ENCODE measurements at regions of chr14 and their contacts with region 1.

Region 1: DNA sequence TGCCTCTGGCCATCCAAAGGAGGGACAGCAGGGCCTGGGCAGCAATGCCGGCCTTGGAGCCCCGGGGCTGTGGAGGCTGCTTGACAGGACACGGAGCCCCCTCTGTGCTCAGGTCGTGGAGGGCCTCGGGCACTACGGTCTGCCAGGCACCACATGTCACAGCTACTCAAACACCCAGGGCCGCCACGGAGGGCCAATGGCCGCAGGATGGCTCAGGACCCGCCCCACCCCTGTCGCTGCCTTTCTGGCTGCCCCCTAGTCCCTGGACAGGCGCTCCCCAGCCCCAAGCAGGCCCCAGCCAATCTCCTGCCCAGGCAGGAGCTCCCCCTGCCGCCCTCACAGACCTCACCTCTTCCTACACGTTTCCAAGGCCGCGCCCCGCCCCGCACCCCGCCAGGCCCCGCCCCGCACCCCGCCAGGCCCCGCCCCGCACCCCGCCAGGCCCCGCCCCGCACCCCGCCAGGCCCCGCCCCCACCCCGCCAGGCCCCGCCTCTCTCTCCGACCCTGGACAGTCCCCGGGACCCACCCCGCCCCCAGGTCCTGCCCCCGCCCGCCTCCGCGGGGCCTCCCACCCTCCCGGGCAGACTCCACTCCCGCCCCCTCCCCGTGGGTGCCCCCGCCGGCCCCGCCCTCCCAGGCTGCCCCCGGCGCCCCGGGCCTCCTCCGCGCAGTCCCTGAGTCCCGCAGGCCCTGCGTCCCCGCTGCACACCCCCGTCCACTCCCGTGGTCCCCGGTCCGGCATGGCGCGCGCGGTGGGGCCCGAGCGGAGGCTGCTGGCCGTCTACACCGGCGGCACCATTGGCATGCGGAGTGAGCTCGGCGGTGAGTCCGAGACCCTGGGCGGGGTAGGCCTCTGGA is at the start of gene ASPG:
- DNase-seq: peak; percentile 75 to 87 (median 84)
- ATAC-seq: peak; percentile 44 to 50
- H3K4me3 ChIP-seq: peak within 1 kb of the TSS; percentile 36
- H3K27ac ChIP-seq: peak within 1 kb of the TSS; percentile 78
- H3K4me1 ChIP-seq: peaks cover 5% of the 10 kb centered on the region
- H3K27me3 ChIP-seq: no peaks in the 10 kb centered on the region
- total RNA-seq, gene ASPG: 169 to 307 (median 208) TPM

Region 2: DNA sequence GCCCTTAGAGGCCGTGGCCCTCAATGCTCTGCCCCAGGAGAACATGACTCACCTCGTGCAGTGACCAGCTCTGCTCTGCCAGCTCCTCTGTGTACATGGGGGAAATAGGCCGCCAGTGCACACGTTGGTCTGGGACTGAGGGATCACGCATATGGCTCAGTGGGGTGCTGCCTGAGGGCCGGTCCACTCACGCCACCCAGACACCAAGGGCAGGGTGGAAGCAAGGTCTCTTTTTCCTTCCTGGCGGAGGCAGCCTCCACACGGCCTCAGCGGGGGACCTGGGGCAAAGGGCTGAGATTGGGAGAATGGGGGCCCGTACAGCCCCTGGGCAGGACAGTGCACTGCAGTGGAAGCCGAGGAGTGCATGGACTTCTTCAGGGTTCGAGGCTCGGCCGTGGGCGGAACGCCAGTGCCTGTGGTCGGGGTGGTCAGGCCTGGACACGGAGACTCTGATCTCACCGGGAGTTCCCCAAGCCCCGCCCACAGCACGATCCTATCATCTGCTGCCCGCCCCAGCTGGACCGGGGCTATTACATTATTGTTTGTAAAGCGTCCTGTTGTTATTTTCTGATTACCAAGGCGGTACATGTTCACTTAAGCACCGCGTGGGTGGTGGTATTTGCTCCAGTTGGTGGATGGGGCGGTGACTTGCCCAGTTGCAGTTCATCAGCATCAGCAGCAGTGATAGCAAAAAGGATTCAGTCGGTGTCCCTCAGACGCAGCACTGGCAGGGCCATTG is 195.8 kb before region 1 on chr14:
- intact Hi-C with region 1: no loop called
- DNase-seq: peak in 1 of 3 donors; percentile 70
- ATAC-seq: peak; percentile 14 to 41
- H3K4me3 ChIP-seq: no peak overlapping the region
- H3K27ac ChIP-seq: no peak overlapping the region
- H3K4me1 ChIP-seq: no peaks in the 10 kb centered on the region
- H3K27me3 ChIP-seq: no peaks in the 10 kb centered on the region

Region 3: DNA sequence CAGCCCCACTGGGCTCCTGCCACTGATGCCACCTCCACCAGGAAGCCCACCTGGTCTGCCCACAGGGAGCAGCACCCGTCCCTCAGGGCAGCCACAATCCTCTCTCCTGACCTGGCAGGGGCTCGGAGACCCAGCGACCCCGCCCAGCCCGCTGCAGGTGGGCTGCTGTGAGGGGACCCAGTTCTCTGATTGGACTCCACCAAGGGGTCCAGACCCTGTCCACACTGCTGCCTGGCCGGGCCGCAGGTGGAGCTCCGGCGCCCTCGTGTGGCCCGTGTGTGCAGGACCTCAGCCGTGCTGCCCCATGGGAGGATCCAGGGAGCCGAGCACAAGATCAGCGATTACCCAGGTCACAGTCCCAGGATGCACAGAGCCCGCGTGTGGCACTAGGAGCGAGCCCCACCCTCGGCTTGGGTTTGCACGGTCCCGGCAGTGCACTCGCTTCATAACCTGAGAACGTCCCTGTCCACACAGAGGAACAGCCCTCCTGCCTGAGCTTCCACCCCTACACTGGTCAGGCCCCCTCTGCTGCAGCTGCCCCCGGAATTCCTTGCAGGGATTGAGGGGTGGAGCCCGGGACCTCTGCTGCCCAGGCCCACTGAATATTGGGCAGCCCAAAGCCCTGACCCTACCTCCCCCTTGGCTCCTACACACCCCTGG is 554.8 kb after region 1 on chr14:
- intact Hi-C with region 1: loop called in 1 of 4 experiments (anchors 10 kb)
- DNase-seq: peak in 2 of 3 donors; percentile 84 to 85
- ATAC-seq: peak; percentile 88
- H3K4me3 ChIP-seq: no peak overlapping the region
- H3K27ac ChIP-seq: no peak overlapping the region
- H3K4me1 ChIP-seq: no peaks in the 10 kb centered on the region
- H3K27me3 ChIP-seq: no peaks in the 10 kb centered on the region